ENCODE measurements at regions of chr6 and their contacts with region 1.

Region 1: DNA sequence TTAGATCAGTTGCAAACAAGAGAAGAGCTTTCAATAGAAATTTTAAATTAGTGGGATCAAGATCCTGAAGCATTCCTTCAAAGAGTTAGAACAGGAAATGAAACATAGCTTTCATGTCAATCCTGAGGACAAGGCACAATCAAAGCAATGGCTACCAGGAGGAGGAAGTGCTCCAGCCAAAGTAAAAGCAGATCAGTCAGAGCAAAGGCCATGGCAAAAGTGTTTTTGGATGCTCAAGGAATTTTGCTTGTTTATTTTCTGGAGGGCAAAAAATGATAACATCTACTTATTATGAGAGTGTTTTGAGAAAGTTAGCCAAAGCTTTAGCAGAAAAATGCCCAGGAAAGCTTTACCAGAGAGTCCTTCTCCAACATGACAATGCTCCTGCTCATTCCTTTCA is 61.0 kb upstream of the ECI2 start:
- DNase-seq: no peak
- ATAC-seq: no peak
- H3K4me3 Mint-ChIP-seq: no peak overlapping the region
- H3K27ac Mint-ChIP-seq: no peak overlapping the region
- H3K4me1 Mint-ChIP-seq: no peaks in the 10 kb centered on the region
- H3K27me3 Mint-ChIP-seq: peaks cover 7% of the 10 kb centered on the region
- CTCF ChIP-seq: no peak

Region 2: GRCh38 chr6:4180652-4181255 is 15.6 kb before region 1 on chr6:
- CTCF ChIA-PET with region 1: no interaction called
- POLR2A ChIA-PET with region 1: no interaction called
- intact Hi-C with region 1: no loop called
- DNase-seq: no peak
- ATAC-seq: no peak
- H3K4me3 Mint-ChIP-seq: no peak overlapping the region
- H3K27ac Mint-ChIP-seq: no peak overlapping the region
- H3K4me1 Mint-ChIP-seq: peaks cover 9% of the 10 kb centered on the region
- H3K27me3 Mint-ChIP-seq: peaks cover 18% of the 10 kb centered on the region
- CTCF ChIP-seq: no peak

Region 3: DNA sequence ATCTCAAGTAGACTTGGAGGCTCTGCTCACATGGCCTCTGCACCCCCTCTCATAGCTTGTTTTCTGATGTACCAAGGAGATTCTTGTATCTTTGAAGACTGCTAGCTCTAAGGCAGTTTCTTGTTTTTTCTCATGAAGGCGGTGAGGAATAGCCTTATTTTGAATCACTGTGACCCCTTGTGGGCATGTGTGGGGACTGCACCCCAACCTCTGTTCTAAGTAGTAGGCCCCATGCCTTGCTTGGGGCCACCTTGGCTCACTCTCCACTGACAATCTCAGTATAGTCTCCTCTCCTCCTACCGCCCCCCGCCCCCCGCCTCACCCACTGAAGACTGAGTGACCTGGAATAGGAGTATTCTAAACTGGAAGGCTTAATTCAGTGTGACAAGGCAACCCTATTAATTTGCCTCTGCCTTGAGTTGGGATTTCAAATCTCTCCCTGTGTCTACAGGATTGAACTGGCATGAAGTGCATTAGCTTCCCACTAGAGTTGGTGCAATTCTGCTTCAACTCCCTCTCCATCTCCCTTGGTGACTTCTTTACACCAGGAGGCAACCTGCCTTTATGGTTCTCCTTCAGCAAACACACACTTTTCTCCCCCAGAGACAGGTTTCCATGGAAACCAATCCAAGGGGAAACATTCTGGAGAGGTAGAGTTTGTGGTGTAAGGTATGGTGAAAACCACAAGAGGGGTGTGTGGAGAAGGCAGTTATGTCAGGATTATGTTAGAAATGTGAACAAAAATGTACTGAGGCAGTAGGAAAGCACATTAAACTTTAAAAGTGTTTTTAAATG is 14.5 kb after region 1 on chr6:
- CTCF ChIA-PET with region 1: interaction called, 15 read pairs
- POLR2A ChIA-PET with region 1: no interaction called
- intact Hi-C with region 1: no loop called
- DNase-seq: peak; percentile 81
- ATAC-seq: peak; percentile 83
- H3K4me3 Mint-ChIP-seq: no peak overlapping the region
- H3K27ac Mint-ChIP-seq: no peak overlapping the region
- H3K4me1 Mint-ChIP-seq: peaks cover 4% of the 10 kb centered on the region
- H3K27me3 Mint-ChIP-seq: peaks cover 13% of the 10 kb centered on the region
- CTCF ChIP-seq: peak; percentile 56

Measured in activated CD8-positive, alpha-beta T cell treated with anti-CD3 and anti-CD28 coated beads for 36 hours (primary cell).